Activated T-helper 1 cell treated with anti-CD3 and anti-CD28 coated beads, Interleukin-12 subunit alpha, Interleukin-12 subunit beta, Interleukin-2, Interleukin-4 antibody, amounts not matched to agents 30 ng/mL and 10 ng/mL and 1 ng/mL, durations not matched to agents 14 hours and 24 hours and 36 hours (primary cell): ENCODE measurements at regions of chr17 and their contacts with region 1.

Region 1: DNA sequence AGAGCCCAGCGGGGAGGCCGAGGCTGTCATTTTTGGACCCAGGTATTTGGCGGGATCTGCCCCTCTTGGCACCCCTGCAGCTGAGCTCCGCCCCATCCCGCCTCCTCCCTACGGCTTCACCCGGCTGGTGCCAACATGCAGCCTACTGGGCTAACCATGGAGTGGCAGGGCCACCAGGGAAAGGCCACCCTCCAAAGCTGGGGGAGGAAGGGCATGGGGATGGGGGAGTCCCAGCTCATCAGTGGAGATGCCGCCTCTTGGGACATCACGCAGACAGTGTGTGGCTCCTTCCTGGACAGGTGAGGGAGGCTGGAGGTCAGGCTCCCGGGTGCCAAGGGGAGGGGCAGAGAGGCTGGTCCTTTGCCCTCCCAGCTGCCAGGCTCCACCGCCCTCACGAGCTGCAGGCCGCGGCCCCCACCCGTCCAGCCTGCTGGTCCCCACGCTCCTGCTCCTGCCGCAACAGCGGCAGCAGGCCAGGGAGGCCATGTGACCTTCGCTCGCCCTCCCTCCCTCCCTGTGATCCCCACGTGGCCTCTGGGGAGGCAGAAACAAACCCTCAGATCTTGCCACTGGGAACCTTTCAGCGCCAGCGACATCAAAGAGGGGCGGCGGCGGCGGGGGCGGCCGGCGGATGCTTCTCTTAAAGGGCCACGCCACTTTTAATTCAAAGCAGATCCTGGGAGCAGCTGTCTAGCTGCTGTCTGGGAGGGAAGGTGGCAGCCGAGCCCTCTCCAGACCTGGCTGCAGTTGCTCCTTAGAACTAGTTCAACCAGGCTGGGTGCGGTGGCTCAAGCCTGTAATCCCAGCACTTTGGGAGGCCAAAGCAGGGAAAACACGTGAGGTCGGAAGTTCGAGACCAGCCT is 6.8 kb upstream of the NOTUM start:
- DNase-seq: peak; percentile 82
- H3K4me3 Mint-ChIP-seq: peak overlapping the region; percentile 74
- H3K27ac Mint-ChIP-seq: peak overlapping the region; percentile 73
- H3K4me1 Mint-ChIP-seq: peaks cover 5% of the 10 kb centered on the region
- H3K27me3 Mint-ChIP-seq: peaks cover 27% of the 10 kb centered on the region

Region 2: DNA sequence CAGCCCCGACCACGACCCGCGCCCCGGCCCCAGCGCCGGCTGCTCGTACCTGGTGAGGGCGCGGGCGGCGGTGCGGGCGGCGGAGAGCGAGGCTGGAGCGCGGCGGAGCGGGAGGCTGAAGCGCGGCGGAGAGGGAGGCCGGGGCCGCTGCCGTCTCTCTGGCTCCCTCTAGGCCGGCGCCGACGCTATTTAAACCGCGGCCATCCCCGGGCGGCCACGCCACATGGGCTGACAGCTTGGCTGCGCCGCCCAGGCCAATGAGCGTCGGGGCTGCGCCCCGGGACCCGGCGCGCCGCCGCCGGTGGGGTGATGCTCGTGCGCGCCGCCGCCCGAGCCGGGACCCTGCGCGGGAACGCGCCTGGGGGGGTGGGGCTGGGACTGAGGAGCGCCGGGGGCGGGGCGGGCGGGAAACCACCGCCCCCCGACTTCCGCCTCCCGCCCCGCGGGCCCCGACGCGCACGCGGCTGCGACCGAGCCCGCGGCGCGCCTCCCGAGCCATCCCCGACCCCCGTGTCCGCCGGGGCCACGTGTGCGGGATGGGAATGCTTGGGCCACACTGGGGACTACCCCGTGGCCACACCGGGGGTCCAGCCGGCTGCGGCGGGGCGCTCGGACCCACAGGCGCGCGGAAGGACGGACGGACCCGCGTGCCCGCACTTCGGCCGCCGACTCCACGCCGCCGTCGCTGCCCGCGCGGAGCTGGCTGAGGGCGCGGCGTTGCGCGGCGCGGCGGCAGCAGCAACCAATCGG is 130.5 kb after region 1 on chr17 and contains the start of gene FASN:
- intact Hi-C with region 1: loop called (anchors 1 kb)
- DNase-seq: peak; percentile 90
- H3K4me3 Mint-ChIP-seq: peak within 1 kb of the TSS; percentile 82
- H3K27ac Mint-ChIP-seq: peak within 1 kb of the TSS; percentile 72
- H3K4me1 Mint-ChIP-seq: no peaks in the 10 kb centered on the region
- H3K27me3 Mint-ChIP-seq: no peaks in the 10 kb centered on the region
- total RNA-seq, gene FASN: 415 and 421 TPM in 2 replicates